Spleen (tissue), 13 donors: ENCODE measurements at regions of chr14 and their contacts with region 1.

Region 1: GRCh38 chr14:20530771-20531571 is 25.6 kb downstream of the RNASE10 start:
- DNase-seq: peak; percentile 83
- H3K4me3 ChIP-seq: no peak overlapping the region
- H3K27ac ChIP-seq: no peak overlapping the region
- H3K4me1 ChIP-seq: peaks cover 0 to 6% (median 3%) of the 10 kb centered on the region in 6 donors
- H3K27me3 ChIP-seq: peaks cover 0 to 6% (median 0%) of the 10 kb centered on the region in 7 donors
- CTCF ChIP-seq: peak; percentile 35 to 80 (median 53)
- POLR2A ChIP-seq: no peak

Region 2: DNA sequence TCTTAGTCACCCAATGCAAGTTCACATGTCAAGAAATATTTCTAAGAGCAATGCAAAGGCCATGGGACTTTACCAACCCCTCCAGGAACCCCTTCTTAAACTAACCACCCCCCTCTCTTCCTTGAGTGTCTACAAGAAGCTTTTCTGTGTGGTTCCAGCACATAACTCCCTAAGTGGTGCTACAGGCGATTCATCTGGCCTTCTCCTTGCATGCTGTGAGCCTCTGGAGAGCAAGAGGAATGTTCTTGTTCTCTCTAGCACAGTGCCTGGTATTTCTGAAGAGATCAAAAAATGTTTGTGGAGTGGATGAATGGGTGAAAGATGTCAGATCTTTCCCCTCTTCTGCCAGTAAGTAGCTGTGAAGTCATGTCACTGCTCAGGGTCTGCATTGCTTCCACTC is 66.1 kb after region 1 on chr14:
- intact Hi-C with region 1: loop called (anchors 10 kb)
- DNase-seq: no peak
- H3K4me3 ChIP-seq: no peak overlapping the region
- H3K27ac ChIP-seq: no peak overlapping the region
- H3K4me1 ChIP-seq: no peaks in the 10 kb centered on the region
- H3K27me3 ChIP-seq: no peaks in the 10 kb centered on the region
- CTCF ChIP-seq: no peak
- POLR2A ChIP-seq: no peak